ENCODE measurements at regions of chr9 and their contacts with region 1.

Region 1: DNA sequence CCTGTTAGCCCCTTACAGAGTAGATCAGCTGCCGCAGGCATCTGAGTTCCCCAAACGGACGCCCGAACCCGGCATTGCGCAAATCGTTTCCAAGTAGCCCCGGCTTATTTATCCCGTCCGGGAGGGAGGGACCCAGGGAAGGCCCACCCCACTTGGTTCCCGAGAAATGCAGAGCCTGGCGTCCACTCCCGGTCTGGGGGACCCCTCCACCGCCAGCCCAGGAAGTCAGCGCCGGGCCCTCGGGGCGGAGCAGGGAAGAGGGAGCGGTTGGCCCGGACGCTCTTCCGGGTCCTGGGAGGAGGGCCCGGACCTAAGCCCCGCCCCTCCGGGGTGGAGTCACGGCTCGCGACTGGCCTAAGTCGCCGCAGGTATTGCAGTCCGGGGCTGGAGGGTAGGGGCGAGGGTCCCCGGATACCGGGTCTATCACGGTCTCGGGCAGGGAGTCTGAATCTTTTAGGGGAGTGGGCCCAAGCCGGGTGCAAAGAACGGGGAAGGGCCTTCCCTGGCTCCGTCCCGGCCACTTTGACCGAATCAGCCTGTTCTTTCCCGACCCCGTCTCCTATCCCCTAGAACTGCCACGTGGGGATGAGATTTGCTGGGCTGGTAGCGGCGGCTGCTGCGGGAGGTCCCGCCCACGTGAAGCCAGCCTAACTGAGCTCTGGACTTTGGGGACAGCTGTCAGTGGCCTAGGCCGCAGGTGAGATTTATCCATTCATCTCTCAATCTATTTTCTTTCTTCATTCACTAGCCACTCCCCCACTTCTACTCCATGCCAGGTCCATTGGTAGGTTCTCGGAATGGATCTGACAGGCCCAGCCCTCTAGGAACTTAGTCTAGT is at the start of gene RABEPK:
- DNase-seq: peak; percentile 90
- H3K4me3 Mint-ChIP-seq: peak within 1 kb of the TSS; percentile 95
- H3K27ac Mint-ChIP-seq: peak within 1 kb of the TSS; percentile 89
- H3K4me1 Mint-ChIP-seq: peaks cover 21% of the 10 kb centered on the region
- H3K27me3 Mint-ChIP-seq: peaks cover 2% of the 10 kb centered on the region
- total RNA-seq, gene RABEPK: 32.8 and 33.1 TPM in 2 replicates

Region 2: GRCh38 chr9:124868511-124869465 is 331.6 kb before region 1 on chr9:
- intact Hi-C with region 1: loop called (anchors 1 kb)
- DNase-seq: peak; percentile 93
- H3K4me3 Mint-ChIP-seq: peak overlapping the region; percentile 99
- H3K27ac Mint-ChIP-seq: peak overlapping the region; percentile 100
- H3K4me1 Mint-ChIP-seq: peaks cover 56% of the 10 kb centered on the region
- H3K27me3 Mint-ChIP-seq: peaks cover 1% of the 10 kb centered on the region

Region 3: DNA sequence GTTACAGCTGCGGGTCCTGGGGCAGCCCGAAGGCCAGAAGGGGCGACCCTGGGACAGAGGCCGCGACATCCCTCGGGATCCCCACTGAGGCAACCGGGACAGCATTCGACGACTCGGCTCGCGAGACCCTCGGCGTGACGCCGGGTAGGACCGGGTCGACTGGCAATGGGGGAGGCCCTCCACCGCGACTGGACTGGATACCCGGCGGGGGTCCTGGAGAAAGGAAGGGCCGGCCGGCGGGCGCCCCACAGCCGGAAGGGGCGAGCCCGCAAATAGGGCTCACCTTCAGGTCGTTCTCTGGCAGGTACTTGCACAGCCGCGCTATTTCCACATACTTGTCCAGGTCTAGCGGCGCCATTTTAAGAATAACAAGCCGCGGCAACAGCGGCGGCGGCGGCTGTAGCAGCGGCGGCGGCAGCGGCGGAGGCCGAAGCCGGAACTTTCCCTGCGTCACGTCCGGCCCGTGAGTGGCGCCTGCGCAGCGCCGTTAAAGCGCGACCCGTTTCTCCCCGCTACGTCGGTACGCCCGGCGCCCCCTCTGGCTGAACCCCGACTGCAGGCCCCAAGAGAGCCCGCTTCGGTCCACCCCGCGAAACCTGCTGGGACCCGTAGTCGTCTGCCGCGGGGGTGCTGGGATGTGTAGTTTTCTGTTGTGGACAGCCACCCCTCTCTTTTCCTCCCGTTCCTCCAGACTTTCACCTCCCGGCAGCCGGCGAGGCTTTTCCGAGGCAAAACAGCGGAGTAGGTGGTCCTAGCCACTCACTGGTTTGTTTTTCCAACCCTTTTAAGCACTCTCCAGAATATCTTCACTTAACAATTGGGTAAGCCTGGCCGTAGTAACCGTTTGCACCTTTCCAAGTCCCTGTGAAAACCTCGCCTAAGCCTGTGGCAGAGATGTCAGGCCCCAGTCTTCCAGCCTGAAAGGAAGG is 10.8 kb before region 1 on chr9 and contains the start of gene PPP6C:
- intact Hi-C with region 1: loop called (anchors 1 kb)
- DNase-seq: peak; percentile 96
- H3K4me3 Mint-ChIP-seq: peak within 1 kb of the TSS; percentile 96
- H3K27ac Mint-ChIP-seq: peak within 1 kb of the TSS; percentile 88
- H3K4me1 Mint-ChIP-seq: peaks cover 33% of the 10 kb centered on the region
- H3K27me3 Mint-ChIP-seq: no peaks in the 10 kb centered on the region
- total RNA-seq, gene PPP6C: 47.2 and 50.8 TPM in 2 replicates

Region 4: GRCh38 chr9:125261501-125262293 is 61.3 kb after region 1 on chr9 and contains the start of gene GAPVD1:
- intact Hi-C with region 1: loop called (anchors 1 kb)
- DNase-seq: peak; percentile 88
- H3K4me3 Mint-ChIP-seq: peak within 1 kb of the TSS; percentile 99
- H3K27ac Mint-ChIP-seq: peak within 1 kb of the TSS; percentile 93
- H3K4me1 Mint-ChIP-seq: peaks cover 42% of the 10 kb centered on the region
- H3K27me3 Mint-ChIP-seq: no peaks in the 10 kb centered on the region
- total RNA-seq, gene GAPVD1: 53.6 and 56.8 TPM in 2 replicates

Region 5: DNA sequence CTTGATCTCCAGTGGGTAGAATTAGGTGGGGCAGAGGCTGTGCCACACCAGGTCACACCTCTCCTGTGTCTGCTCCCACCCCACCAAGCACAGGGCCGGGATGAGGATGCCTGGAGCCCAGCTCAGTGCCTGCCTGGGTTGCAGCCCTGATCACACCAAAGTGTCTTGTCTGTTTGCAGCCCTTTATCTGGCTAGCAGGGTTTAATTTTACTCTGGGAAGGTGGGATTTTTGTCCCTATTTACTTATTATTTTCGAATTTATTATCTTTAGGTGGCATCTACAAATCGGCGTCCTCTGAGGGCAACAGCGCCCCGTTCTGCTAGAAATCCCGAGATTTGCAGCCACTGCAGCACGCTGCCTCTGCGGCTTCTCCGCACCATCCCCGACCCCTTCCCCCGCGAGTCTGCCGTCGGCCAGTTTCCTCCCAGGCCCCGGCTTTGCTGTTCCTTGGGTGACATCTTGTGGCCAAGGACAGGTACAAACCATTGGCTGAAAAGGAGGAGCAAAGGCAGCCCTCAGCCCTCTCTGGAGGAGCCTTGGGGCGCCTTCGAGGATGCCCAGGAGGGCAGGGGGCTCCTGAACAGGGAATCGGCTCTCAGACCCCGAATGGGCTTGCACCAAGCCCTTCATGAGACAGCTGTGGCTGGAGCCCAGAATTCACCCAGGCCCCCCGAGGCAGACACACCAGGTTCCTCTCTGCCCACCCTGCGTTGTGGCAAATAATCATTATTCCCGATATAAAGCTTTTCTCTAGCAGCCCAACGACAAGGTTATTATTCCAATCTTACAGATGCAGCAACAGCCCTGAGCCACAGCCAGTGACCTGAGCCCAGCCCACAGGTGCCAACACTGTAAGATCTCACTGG is 174.2 kb after region 1 on chr9:
- intact Hi-C with region 1: loop called (anchors 1 kb)
- DNase-seq: peak; percentile 62
- H3K4me3 Mint-ChIP-seq: peak overlapping the region; percentile 45
- H3K27ac Mint-ChIP-seq: no peak overlapping the region
- H3K4me1 Mint-ChIP-seq: no peaks in the 10 kb centered on the region
- H3K27me3 Mint-ChIP-seq: peaks cover 6% of the 10 kb centered on the region